GM12878 (cell line): ENCODE measurements at regions of chr2 and their contacts with region 1.

Region 1: GRCh38 chr2:108575132-108575966 is 41.1 kb downstream of the LIMS1 start:
- DNase-seq: peak; percentile 70
- ATAC-seq: peak; percentile 92
- H3K4me3 ChIP-seq: peak overlapping the region; percentile 24; the same call in 1 of the 2 replicates
- H3K27ac ChIP-seq: no peak overlapping the region
- H3K4me1 ChIP-seq: peaks cover 13% of the 10 kb centered on the region
- H3K27me3 ChIP-seq: no peaks in the 10 kb centered on the region
- CTCF ChIP-seq: no peak
- EP300 ChIP-seq: peak; percentile 42 to 72; a peak in 1 of 4 replicates
- POLR2A ChIP-seq: no peak
- RAD21 ChIP-seq: no peak

Region 2: DNA sequence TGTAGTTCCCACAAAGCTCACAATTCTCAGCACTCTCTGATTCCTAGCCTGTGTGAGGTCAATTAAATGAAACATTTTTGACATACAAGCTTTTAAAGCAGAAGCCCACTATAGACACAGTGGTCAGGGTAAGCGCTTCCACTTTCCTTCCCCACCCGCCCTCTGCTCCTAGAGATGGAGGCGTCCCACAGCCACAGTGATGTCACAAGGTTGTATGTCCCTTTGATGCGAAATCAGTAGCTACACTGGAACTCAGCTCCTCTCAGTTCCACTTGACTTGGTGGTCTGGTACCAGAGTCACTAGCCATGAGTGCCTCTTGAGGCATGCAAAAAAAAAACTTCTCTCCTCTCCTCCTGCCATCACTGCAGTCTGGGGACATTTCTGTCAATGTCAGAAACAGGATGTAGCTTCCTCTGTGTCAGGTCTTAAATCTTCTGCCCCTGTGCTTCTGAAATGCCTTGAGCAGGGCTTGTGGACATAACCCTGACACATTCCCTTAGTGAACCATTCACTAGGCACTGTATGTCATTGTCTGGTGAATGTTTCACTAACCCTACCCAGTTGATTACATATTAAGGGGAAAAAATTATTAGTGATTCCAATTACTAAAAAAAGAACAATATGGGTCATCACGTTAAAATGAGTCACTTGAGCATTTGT is 189.8 kb before region 1 on chr2:
- CTCF ChIA-PET with region 1: no interaction called
- POLR2A ChIA-PET with region 1: no interaction called
- RAD21 ChIA-PET with region 1: interaction called, 6 read pairs
- SMC1A ChIA-PET with region 1: interaction called, 12 read pairs
- in situ Hi-C with region 1: no loop called
- intact Hi-C with region 1: no loop called
- DNase-seq: peak; percentile 48
- ATAC-seq: peak; percentile 85
- H3K4me3 ChIP-seq: no peak overlapping the region
- H3K27ac ChIP-seq: no peak overlapping the region
- H3K4me1 ChIP-seq: no peaks in the 10 kb centered on the region; the same call in 1 of the 2 replicates
- H3K27me3 ChIP-seq: no peaks in the 10 kb centered on the region
- CTCF ChIP-seq: no peak
- EP300 ChIP-seq: peak in 1 of 2 experiments; percentile 24; a peak in 1 of 4 replicates
- POLR2A ChIP-seq: no peak
- RAD21 ChIP-seq: no peak

Region 3: GRCh38 chr2:108533832-108534583 is 41.3 kb before region 1 on chr2 and contains the start of gene LIMS1:
- CTCF ChIA-PET with region 1: interaction called, 16 read pairs
- POLR2A ChIA-PET with region 1: interaction called, 55 read pairs
- RAD21 ChIA-PET with region 1: interaction called, 129 read pairs
- SMC1A ChIA-PET with region 1: interaction called, 214 read pairs
- in situ Hi-C with region 1: no loop called
- intact Hi-C with region 1: loop called (anchors 5 kb)
- DNase-seq: peak; percentile 50
- ATAC-seq: peak; percentile 94
- H3K4me3 ChIP-seq: peak within 1 kb of the TSS; percentile 85
- H3K27ac ChIP-seq: peak within 1 kb of the TSS; percentile 66
- H3K4me1 ChIP-seq: no peaks in the 10 kb centered on the region; the same call in 1 of the 2 replicates
- H3K27me3 ChIP-seq: no peaks in the 10 kb centered on the region
- CTCF ChIP-seq: 0 out of 6 replicates have a peak, but pooled peaks of 1 of the 3 experiments have one; percentile 7
- EP300 ChIP-seq: no peak
- POLR2A ChIP-seq: peak; percentile 93
- RAD21 ChIP-seq: 0 out of 2 replicates have a peak, but pooled peaks have one; percentile 9
- polyA plus RNA-seq, gene LIMS1: 15.7 to 17.6 TPM

Region 4: DNA sequence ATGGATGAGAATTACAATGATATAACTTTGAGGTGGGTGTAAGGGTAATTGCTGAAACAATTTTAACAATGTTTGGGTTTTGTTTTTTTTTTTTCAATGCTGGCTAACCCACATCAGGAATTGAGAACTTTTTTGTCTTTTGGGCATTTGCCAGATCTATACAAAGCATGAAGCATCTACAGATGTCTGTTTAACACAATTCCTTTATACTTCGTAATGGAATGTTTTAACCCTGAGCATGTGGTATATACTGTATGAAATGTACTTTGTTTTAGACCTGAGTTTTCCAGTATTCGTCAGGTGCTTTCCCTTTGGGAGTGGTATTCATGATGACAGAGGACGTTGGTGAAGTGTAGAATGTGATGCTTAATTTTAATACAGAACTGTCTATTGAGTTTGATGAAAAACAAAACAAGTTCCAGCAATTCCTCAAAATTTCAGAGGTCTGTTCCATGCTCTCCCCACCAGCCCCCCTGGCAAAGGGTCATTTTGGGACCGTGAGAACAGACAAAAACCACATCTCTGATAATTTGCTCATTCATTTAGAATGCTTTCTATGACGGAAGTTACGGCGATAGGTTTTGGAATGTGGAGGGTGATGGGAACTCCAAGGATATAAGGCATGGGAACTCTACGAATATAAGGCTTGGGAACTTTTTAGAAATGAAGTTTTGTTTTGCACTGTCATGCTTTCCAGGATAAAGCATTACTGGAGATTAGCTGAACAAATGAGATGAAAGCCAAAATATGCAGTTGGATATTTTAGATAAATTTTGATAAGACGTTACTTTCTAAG is 26.9 kb before region 1 on chr2:
- CTCF ChIA-PET with region 1: interaction called, 4 read pairs
- POLR2A ChIA-PET with region 1: no interaction called
- RAD21 ChIA-PET with region 1: interaction called, 13 read pairs
- SMC1A ChIA-PET with region 1: interaction called, 18 read pairs
- in situ Hi-C with region 1: no loop called
- intact Hi-C with region 1: no loop called
- DNase-seq: no peak
- ATAC-seq: no peak
- H3K4me3 ChIP-seq: no peak overlapping the region
- H3K27ac ChIP-seq: no peak overlapping the region
- H3K4me1 ChIP-seq: no peaks in the 10 kb centered on the region
- H3K27me3 ChIP-seq: no peaks in the 10 kb centered on the region
- CTCF ChIP-seq: no peak
- EP300 ChIP-seq: no peak
- POLR2A ChIP-seq: no peak
- RAD21 ChIP-seq: no peak

Region 5: DNA sequence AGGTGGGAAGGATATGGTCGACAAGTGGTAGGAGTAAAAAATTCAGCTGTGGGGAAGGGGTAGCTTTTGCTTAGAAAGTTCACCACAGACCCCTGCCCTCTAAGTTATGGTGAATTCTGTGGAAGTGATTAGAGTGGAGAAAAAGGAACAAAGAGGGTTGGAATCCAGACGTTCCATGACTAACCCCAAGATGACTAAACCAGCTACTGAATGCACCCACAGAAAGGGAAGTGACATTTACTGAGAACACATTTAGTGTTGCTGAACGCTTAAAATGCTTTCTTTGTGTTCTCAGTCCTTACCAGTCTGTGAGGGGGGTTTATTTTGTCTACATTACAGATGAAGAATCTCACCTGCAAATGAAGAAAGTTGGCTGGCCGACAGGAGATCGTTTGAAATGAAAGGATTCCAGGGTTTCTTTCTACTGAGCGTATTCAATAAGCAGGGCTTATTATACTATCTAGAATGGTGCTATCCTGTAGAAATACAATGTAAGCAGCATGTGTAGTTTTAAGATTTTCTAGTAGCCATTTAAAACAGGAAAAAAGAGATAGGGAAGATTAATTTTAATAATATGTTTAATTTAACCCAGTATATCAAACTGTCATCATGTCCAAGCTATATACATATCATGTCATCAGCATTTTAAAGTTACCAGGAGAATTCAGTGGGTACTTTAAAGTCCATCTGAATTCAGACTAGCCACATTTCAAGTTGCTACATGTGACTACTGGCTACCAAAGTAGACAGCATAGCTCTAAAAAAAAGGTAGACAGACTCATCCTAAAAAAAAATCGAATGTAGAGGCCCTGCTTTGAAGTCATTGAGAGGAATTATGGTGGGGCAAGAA is 19.0 kb after region 1 on chr2:
- CTCF ChIA-PET with region 1: interaction called, 6 read pairs
- POLR2A ChIA-PET with region 1: interaction called, 9 read pairs
- RAD21 ChIA-PET with region 1: interaction called, 21 read pairs
- SMC1A ChIA-PET with region 1: interaction called, 26 read pairs
- in situ Hi-C with region 1: no loop called
- intact Hi-C with region 1: no loop called
- DNase-seq: no peak
- ATAC-seq: peak; percentile 94
- H3K4me3 ChIP-seq: no peak overlapping the region
- H3K27ac ChIP-seq: no peak overlapping the region; the same call in 1 of the 2 replicates
- H3K4me1 ChIP-seq: peaks cover 34% of the 10 kb centered on the region
- H3K27me3 ChIP-seq: no peaks in the 10 kb centered on the region
- CTCF ChIP-seq: no peak
- EP300 ChIP-seq: peak; percentile 94 to 98
- POLR2A ChIP-seq: no peak
- RAD21 ChIP-seq: no peak

Region 6: DNA sequence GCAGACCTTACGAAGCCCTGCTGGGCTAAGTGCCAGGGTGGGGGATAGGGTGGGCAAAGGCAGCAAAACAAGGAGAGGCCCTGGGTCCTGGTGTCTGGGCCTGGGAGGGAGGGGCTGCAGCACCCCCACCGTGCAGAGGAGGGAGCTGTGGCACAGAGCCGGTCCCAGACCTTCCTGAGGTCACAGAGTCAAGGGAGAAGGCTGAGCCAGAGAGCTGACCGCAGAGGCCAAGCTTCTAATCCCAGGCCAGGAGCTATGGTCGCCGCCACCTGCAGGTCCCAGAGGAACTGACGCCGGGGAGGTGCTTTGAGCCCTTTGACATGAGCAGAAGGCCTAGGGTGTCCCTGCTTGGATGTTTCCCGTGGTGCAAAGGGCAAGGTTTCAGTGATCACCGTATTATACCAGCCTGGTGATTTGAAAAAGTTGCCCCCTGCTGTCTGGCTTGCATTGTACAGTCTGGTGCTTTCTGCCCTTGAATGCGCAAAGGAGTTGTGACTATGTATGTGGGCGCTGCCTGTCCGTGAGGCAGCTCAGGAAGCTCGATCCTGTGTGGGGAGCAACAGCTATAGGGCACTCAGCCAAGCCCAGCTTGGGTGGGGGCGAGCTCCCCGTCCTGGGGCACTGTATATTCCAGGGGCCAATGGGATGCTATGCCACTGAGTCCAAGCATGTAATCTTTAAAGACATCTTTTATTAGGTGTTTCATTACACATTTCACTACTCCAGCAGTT is 369.4 kb after region 1 on chr2:
- CTCF ChIA-PET with region 1: no interaction called
- POLR2A ChIA-PET with region 1: no interaction called
- RAD21 ChIA-PET with region 1: no interaction called
- SMC1A ChIA-PET with region 1: no interaction called
- in situ Hi-C with region 1: no loop called
- intact Hi-C with region 1: no loop called
- DNase-seq: no peak
- ATAC-seq: no peak
- H3K4me3 ChIP-seq: no peak overlapping the region
- H3K27ac ChIP-seq: no peak overlapping the region
- H3K4me1 ChIP-seq: no peaks in the 10 kb centered on the region
- H3K27me3 ChIP-seq: no peaks in the 10 kb centered on the region
- CTCF ChIP-seq: no peak
- EP300 ChIP-seq: no peak
- POLR2A ChIP-seq: no peak
- RAD21 ChIP-seq: no peak